H1 (cell line): ENCODE measurements at regions of chr7 and their contacts with region 1.

Region 1: DNA sequence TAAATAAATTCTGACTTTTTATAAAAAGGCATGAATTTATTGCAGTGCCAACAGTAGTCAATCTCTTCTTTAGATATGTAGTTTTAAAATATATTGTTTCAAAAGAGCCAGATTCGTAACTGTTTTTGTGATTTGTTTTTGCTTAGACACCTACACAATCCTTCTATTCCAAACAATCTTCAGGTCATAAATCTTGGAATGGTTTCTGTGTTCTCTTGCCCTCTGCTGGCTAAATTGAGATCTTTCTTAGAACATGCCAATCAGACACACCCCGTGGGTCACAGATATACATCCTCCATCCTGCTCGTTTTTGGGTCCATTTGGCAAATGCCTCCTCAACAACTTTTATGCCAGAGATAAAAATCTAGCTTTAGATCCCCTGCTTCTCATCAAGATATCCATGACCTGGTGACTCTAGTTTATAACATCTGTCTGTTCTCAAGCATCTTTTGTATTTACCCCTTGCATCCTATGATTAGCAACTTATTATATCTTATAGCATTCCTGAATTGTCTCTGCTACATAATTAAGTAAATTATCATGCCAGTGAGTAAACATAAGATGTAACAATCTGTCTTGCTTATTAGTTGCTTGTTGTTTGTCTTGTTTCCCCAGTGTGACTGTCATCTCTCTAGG is 35.3 kb upstream of the IFRD1 start:
- DNase-seq: no peak
- H3K4me3 ChIP-seq: no peak overlapping the region
- H3K27ac ChIP-seq: no peak overlapping the region
- H3K4me1 ChIP-seq: peaks cover 0 to 4% (median 2%) of the 10 kb centered on the region in 4 experiments; a peak in 2 of 7 replicates
- H3K27me3 ChIP-seq: no peaks in the 10 kb centered on the region
- CTCF ChIP-seq: peak in 2 of 3 experiments; percentile 54 to 63; a peak in 3 of 4 replicates
- EP300 ChIP-seq: no peak
- POLR2A ChIP-seq: no peak
- RAD21 ChIP-seq: peak; percentile 73

Region 2: DNA sequence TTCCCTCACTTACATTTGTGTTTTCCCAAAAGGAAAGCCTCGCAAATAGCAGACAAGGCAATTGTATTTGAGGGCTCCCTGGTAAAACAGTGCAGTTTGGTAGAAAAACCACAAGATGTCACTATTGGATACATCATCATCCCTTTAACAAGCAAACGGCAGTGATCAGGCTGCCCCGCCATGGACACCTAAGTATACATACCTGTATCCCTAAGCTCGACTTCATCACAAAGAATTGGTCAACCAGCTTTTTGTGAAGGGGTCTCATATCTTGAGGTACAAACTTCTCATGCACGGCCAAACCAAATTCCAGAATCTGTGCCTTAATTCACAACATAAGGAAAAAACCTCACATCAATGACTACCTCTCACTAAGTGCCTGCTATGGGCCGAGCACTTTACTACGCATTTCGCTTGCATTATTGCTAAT is 673.1 kb before region 1 on chr7:
- CTCF ChIA-PET with region 1: interaction called, 14 read pairs
- POLR2A ChIA-PET with region 1: no interaction called
- DNase-seq: no peak
- H3K4me3 ChIP-seq: no peak overlapping the region
- H3K27ac ChIP-seq: no peak overlapping the region
- H3K4me1 ChIP-seq: peaks cover 0 to 9% (median 0%) of the 10 kb centered on the region in 4 experiments; a peak in 1 of 7 replicates
- H3K27me3 ChIP-seq: no peaks in the 10 kb centered on the region
- CTCF ChIP-seq: peak in 2 of 3 experiments; percentile 79 to 87; a peak in 3 of 4 replicates
- EP300 ChIP-seq: no peak
- POLR2A ChIP-seq: no peak
- RAD21 ChIP-seq: peak; percentile 86 to 91

Region 3: GRCh38 chr7:112290065-112290464 is 124.9 kb before region 1 on chr7:
- CTCF ChIA-PET with region 1: no interaction called
- POLR2A ChIA-PET with region 1: no interaction called
- DNase-seq: no peak
- H3K4me3 ChIP-seq: no peak overlapping the region
- H3K27ac ChIP-seq: no peak overlapping the region
- H3K4me1 ChIP-seq: peaks cover 0 to 7% (median 2%) of the 10 kb centered on the region in 4 experiments; a peak in 2 of 7 replicates
- H3K27me3 ChIP-seq: no peaks in the 10 kb centered on the region
- CTCF ChIP-seq: no peak
- EP300 ChIP-seq: no peak
- POLR2A ChIP-seq: no peak
- RAD21 ChIP-seq: no peak

Region 4: GRCh38 chr7:112346381-112347060 is 68.5 kb before region 1 on chr7:
- CTCF ChIA-PET with region 1: no interaction called
- POLR2A ChIA-PET with region 1: no interaction called
- DNase-seq: no peak
- H3K4me3 ChIP-seq: no peak overlapping the region
- H3K27ac ChIP-seq: no peak overlapping the region
- H3K4me1 ChIP-seq: no peaks in the 10 kb centered on the region
- H3K27me3 ChIP-seq: no peaks in the 10 kb centered on the region
- CTCF ChIP-seq: no peak
- EP300 ChIP-seq: no peak
- POLR2A ChIP-seq: no peak
- RAD21 ChIP-seq: no peak

Region 5: DNA sequence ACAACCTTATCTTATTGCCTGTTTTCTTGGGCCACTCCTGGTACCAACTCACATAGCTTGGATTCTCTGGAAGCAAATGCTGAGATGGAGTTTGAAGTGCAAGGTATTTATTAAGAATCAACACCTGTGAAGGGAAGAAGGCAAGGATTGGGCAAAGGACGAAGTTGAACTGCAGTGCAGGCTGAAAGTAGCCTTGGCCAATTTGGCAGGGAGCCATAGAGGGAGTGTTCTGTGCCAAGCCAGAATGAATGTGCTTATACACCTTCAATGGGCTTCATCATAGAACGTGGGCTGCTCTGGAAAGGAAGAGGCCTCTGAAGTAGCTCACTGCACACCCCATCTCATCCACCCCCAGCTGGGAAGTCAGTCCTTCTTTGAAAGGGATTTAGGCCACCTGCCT is 44.5 kb before region 1 on chr7:
- CTCF ChIA-PET with region 1: no interaction called
- POLR2A ChIA-PET with region 1: no interaction called
- DNase-seq: no peak
- H3K4me3 ChIP-seq: no peak overlapping the region
- H3K27ac ChIP-seq: no peak overlapping the region
- H3K4me1 ChIP-seq: peaks cover 0 to 6% (median 0%) of the 10 kb centered on the region in 4 experiments; a peak in 1 of 7 replicates
- H3K27me3 ChIP-seq: no peaks in the 10 kb centered on the region
- CTCF ChIP-seq: no peak
- EP300 ChIP-seq: no peak
- POLR2A ChIP-seq: no peak
- RAD21 ChIP-seq: no peak

Region 6: GRCh38 chr7:112503361-112503972 is 88.5 kb after region 1 on chr7:
- CTCF ChIA-PET with region 1: no interaction called
- POLR2A ChIA-PET with region 1: no interaction called
- DNase-seq: no peak
- H3K4me3 ChIP-seq: no peak overlapping the region
- H3K27ac ChIP-seq: no peak overlapping the region
- H3K4me1 ChIP-seq: no peaks in the 10 kb centered on the region
- H3K27me3 ChIP-seq: no peaks in the 10 kb centered on the region
- CTCF ChIP-seq: no peak
- EP300 ChIP-seq: no peak
- POLR2A ChIP-seq: no peak
- RAD21 ChIP-seq: no peak